Activated CD8-positive, alpha-beta T cell treated with anti-CD3 and anti-CD28 coated beads, Interleukin-2, amount 10 ng/mL, durations not matched to agents 7 days and 5 days (primary cell): ENCODE measurements at regions of chr19 and their contacts with region 1.

Region 1: GRCh38 chr19:9857920-9858746 is 23.0 kb downstream of the PIN1 start:
- DNase-seq: peak; percentile 47
- ATAC-seq: peak; percentile 78
- H3K4me3 Mint-ChIP-seq: peak overlapping the region; percentile 73
- H3K27ac Mint-ChIP-seq: peak overlapping the region; percentile 91
- H3K4me1 Mint-ChIP-seq: peaks cover 68% of the 10 kb centered on the region
- H3K27me3 Mint-ChIP-seq: no peaks in the 10 kb centered on the region

Region 2: GRCh38 chr19:9751446-9751845 is 106.7 kb before region 1 on chr19:
- CTCF ChIA-PET with region 1: no interaction called
- POLR2A ChIA-PET with region 1: no interaction called
- DNase-seq: no peak
- ATAC-seq: no peak
- H3K4me3 Mint-ChIP-seq: no peak overlapping the region
- H3K27ac Mint-ChIP-seq: no peak overlapping the region
- H3K4me1 Mint-ChIP-seq: no peaks in the 10 kb centered on the region
- H3K27me3 Mint-ChIP-seq: no peaks in the 10 kb centered on the region

Region 3: GRCh38 chr19:9827289-9828238 is 30.6 kb before region 1 on chr19 and contains the start of gene UBL5:
- CTCF ChIA-PET with region 1: interaction called, 3 read pairs
- POLR2A ChIA-PET with region 1: interaction called, 10 read pairs
- DNase-seq: peak; percentile 94
- ATAC-seq: peak; percentile 93
- H3K4me3 Mint-ChIP-seq: peak within 1 kb of the TSS; percentile 98
- H3K27ac Mint-ChIP-seq: peak within 1 kb of the TSS; percentile 97
- H3K4me1 Mint-ChIP-seq: peaks cover 31% of the 10 kb centered on the region
- H3K27me3 Mint-ChIP-seq: no peaks in the 10 kb centered on the region
- total RNA-seq, gene UBL5: 383 to 395 TPM

Region 4: DNA sequence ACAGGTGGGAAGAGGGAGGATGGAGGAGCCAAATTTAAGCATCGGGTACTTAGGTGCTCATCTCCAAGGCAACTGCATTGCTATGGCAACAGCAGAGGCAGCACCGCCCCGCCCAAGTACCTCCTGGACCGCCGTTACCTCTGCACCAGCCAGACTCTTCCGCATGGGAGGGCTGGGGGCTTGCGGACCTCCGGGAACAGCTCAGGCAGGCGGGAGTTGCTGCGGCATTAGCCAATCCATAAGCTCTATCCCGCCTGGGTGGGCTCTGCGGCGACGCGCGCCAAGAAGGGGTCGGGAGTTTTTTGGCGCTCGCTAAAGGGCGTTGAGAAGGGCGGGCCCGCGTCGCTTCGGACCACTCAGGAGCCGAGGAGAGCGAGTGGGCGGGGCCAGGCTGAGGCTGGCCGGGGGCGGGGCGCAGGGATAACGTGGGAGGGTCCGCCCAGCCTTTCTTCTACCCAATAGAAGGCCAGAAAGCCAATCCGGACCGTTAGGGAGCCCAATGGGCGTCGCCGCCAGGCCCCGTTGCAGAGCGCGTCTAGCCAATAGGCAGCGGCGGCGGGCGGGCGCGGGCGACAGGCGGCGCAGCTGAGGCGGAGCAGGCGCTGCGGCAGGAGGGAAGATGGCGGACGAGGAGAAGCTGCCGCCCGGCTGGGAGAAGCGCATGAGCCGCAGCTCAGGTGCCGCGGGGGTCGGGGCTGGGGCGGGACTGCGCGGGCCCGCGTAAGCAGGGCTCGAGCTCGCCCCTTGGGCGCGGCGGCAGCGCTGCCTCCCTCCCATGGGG is 23.2 kb before region 1 on chr19 and contains the start of gene PIN1:
- CTCF ChIA-PET with region 1: interaction called, 10 read pairs
- POLR2A ChIA-PET with region 1: interaction called, 4 read pairs
- DNase-seq: peak; percentile 99
- ATAC-seq: peak; percentile 99
- H3K4me3 Mint-ChIP-seq: peak within 1 kb of the TSS; percentile 84
- H3K27ac Mint-ChIP-seq: peak within 1 kb of the TSS; percentile 89
- H3K4me1 Mint-ChIP-seq: peaks cover 27% of the 10 kb centered on the region
- H3K27me3 Mint-ChIP-seq: no peaks in the 10 kb centered on the region
- total RNA-seq, gene PIN1: 114 to 117 TPM